IMR-90 (cell line): ENCODE measurements at regions of chr14 and their contacts with region 1.

Region 1: DNA sequence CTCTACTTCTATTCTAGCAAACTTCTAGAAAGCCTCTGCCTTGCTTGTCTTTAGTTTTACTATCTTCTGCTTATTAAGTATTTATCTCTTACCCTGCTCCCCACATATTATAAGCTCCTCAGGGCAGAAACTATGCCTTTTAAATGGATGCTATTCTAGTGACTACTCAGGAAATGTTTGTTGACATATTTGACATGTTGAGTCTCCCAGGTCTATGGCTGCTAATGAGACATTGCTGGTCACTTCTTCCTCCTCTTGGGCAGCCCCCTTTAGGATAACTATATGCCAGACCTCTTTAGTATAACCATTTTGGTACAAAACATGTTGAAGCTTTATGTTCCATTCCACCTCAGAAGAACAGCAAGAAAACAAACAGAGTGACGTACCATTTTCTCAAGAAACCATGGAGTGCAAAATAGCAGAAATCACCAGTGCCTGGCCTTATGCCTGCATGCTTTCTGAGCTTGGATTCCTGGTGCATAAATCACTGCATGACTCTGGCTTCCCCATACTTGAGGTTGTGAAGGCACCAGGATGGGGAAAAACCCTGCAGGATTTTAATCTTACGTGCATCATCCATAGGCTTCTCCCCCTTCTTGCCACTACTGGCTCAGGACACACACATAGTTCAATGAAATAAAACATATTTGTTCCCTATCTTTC is 202.6 kb downstream of the TMX1 start:
- DNase-seq: peak; percentile 99
- ATAC-seq: peak; percentile 87
- H3K4me3 ChIP-seq: no peak overlapping the region
- H3K27ac ChIP-seq: peak overlapping the region; percentile 88
- H3K4me1 ChIP-seq: peaks cover 17% of the 10 kb centered on the region
- H3K27me3 ChIP-seq: no peaks in the 10 kb centered on the region
- CTCF ChIP-seq: no peak
- POLR2A ChIP-seq: no peak
- RAD21 ChIP-seq: peak; percentile 29; the same call in 1 of the 2 replicates

Region 2: DNA sequence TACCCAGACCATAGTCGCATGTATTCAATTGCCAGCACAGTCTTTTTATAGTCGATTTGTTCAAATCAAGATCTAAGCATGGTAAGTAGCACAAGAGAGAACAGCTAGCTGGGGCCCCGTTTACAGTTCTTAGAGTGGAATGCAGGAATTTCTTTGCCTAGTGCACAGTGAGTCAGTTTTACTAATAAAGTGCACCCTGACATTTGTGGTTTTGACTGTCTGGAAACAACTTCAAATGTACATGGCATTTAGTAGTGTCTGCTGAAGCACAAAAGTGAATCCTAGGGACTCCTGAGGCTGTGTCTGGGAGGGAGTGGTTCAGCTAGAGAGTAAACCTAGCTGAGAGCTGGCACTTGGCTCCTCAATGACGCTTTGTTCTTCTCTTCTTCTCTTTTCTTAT is 137.7 kb before region 1 on chr14:
- CTCF ChIA-PET with region 1: no interaction called
- POLR2A ChIA-PET with region 1: no interaction called
- dilution Hi-C with region 1: no loop called
- in situ Hi-C with region 1: no loop called
- intact Hi-C with region 1: loop called (anchors 5 kb)
- DNase-seq: peak; percentile 96
- ATAC-seq: peak; percentile 97
- H3K4me3 ChIP-seq: no peak overlapping the region
- H3K27ac ChIP-seq: peak overlapping the region; percentile 33; the same call in 1 of the 2 replicates
- H3K4me1 ChIP-seq: peaks cover 5% of the 10 kb centered on the region
- H3K27me3 ChIP-seq: no peaks in the 10 kb centered on the region
- CTCF ChIP-seq: no peak
- POLR2A ChIP-seq: no peak; the same call in 1 of the 2 replicates
- RAD21 ChIP-seq: peak; percentile 37

Region 3: DNA sequence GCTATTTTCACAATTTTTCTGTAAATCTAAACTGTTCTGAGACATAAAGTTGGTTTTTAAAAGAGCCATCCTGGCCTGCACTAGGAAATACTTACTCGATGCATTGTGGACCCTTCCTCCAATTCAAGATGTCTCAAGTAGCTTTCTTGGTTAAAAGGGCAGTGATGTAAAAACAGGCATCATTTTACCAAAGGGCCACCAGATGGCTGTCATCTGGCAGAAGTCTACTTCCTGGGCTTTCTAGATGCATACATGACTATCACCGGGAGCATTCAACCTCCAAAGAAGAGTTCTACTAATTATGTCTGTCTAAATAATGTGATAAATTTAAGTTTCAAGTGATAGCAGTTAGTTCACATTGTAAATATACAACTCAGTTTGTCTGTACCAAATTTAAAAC is 112.3 kb after region 1 on chr14:
- CTCF ChIA-PET with region 1: no interaction called
- POLR2A ChIA-PET with region 1: interaction called, 21 read pairs
- dilution Hi-C with region 1: no loop called
- in situ Hi-C with region 1: no loop called
- intact Hi-C with region 1: loop called (anchors 2 kb)
- DNase-seq: peak; percentile 72
- ATAC-seq: peak; percentile 36
- H3K4me3 ChIP-seq: peak overlapping the region; percentile 19; the same call in 1 of the 2 replicates
- H3K27ac ChIP-seq: peak overlapping the region; percentile 89
- H3K4me1 ChIP-seq: peaks cover 20% of the 10 kb centered on the region
- H3K27me3 ChIP-seq: no peaks in the 10 kb centered on the region
- CTCF ChIP-seq: peak; percentile 33
- POLR2A ChIP-seq: no peak
- RAD21 ChIP-seq: peak; percentile 53

Region 4: DNA sequence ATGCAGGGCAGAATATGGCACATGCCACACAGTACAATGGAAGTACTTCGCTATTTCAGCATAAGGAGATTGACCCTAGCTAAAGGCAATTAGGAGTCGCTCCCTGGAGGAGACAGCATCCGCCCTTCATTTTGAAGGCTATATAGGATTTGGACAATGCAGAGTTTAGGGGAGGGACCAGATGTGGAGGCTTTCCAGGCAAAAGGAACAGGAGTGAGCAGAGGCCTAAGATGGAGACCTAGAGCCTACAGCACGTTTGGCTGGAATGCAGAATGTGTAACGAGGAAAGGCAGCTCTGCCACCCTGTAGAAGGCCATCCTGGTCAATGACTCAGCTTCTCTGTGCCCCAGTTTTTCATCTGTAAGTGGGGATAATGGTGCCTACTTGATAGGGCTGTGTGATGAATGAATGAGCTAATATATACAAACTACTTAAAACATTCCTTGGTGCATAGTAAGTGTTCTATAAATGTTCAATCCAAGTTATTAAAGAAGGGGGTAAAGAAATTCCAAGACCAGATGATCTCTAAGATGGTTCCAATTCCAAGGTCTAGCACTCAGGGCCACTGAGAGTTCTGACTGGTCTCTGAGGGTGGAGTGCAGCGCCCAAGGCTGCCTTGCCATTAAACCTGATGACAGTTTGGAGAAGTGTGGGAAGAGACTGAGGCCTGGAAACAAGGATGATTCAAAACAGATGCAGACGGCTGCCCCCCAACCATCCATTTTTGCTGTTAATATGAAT is 154.8 kb after region 1 on chr14:
- CTCF ChIA-PET with region 1: no interaction called
- POLR2A ChIA-PET with region 1: no interaction called
- dilution Hi-C with region 1: no loop called
- in situ Hi-C with region 1: no loop called
- intact Hi-C with region 1: loop called (anchors 5 kb)
- DNase-seq: peak; percentile 79
- ATAC-seq: peak; percentile 72
- H3K4me3 ChIP-seq: no peak overlapping the region
- H3K27ac ChIP-seq: peak overlapping the region; percentile 46
- H3K4me1 ChIP-seq: peaks cover 15% of the 10 kb centered on the region
- H3K27me3 ChIP-seq: no peaks in the 10 kb centered on the region
- CTCF ChIP-seq: no peak
- POLR2A ChIP-seq: no peak
- RAD21 ChIP-seq: 0 out of 2 replicates have a peak, but pooled peaks have one; percentile 6

Region 5: DNA sequence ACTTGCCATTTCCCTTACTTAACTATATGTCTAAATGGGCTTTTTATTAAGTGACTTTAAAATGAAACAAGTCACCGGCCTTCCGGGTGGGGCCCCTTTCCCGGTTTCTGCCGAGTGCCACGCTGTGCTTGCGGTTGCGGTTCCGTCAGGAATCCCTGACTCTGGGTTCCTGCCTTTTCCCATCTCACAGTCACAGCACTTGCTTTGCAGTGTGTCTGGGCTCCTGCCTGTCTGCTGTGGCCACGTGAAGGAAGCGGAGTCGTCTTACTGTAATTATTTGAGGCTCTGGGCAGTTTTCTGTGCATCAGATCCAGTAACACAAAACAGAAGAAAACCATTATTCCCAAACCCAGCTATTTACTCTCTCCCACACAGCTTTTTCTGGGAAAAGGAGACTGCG is 165.1 kb after region 1 on chr14:
- CTCF ChIA-PET with region 1: no interaction called
- POLR2A ChIA-PET with region 1: no interaction called
- dilution Hi-C with region 1: no loop called
- in situ Hi-C with region 1: no loop called
- intact Hi-C with region 1: no loop called
- DNase-seq: peak; percentile 59
- ATAC-seq: peak; percentile 28; the same call in 1 of the 2 replicates
- H3K4me3 ChIP-seq: no peak overlapping the region
- H3K27ac ChIP-seq: peak overlapping the region; percentile 48
- H3K4me1 ChIP-seq: peaks cover 21% of the 10 kb centered on the region
- H3K27me3 ChIP-seq: no peaks in the 10 kb centered on the region
- CTCF ChIP-seq: no peak
- POLR2A ChIP-seq: no peak
- RAD21 ChIP-seq: no peak